ENCODE measurements at regions of chr6 and their contacts with region 1.

Region 1: DNA sequence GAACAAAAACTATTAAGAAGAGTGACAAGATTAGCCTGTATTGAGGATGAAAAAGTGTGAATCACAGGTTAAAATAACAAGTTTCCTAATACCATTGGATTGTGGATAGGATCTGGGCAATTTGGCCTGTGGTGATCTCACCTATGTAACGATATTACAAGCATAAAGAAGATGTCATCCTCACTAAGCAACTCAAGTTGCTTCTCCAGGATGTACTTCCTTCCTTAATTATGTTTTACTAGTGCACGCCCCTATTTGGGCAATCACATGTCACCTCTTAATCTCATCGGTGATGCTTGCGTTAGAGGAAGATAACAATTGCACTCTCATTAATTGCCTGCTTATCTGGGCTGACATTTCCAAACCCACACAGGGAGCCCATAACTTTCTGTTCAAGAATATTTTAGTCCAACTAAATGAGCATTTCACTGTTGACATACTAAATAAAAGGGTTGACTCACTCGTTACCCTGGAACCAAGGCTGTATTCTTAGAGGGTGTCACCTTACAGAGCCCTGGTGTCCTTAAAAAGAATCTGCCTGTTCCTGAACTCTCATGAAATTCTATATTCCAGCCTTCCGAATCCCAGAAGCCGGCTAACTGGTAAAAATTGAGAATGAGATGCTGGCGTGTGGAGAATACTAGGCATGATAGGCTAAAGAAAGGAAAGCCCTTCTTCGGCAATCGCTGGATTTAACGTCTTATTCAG is 88.2 kb upstream of the ATXN1 start:
- DNase-seq: peak; percentile 18 to 25
- ATAC-seq: peak; percentile 99
- H3K4me3 ChIP-seq: peak overlapping the region; percentile 0 to 34 (median 17)
- H3K27ac ChIP-seq: peak overlapping the region; percentile 71 to 84 (median 77)
- H3K4me1 ChIP-seq: peaks cover 17 to 24% of the 10 kb centered on the region in 2 donors
- H3K27me3 ChIP-seq: no peaks in the 10 kb centered on the region
- CTCF ChIP-seq: no peak
- POLR2A ChIP-seq: no peak

Region 2: GRCh38 chr6:16391451-16391912 is 458.0 kb before region 1 on chr6:
- in situ Hi-C with region 1: no loop called
- intact Hi-C with region 1: loop called (anchors 5 kb)
- DNase-seq: no peak
- ATAC-seq: peak in 1 of 2 donors; percentile 50
- H3K4me3 ChIP-seq: no peak overlapping the region
- H3K27ac ChIP-seq: peak overlapping the region; percentile 24 to 61 (median 46)
- H3K4me1 ChIP-seq: peaks cover 10 to 12% of the 10 kb centered on the region in 2 donors
- H3K27me3 ChIP-seq: no peaks in the 10 kb centered on the region
- CTCF ChIP-seq: no peak
- POLR2A ChIP-seq: no peak

Region 3: GRCh38 chr6:16803294-16804200 is 45.9 kb before region 1 on chr6:
- in situ Hi-C with region 1: no loop called
- intact Hi-C with region 1: loop called (anchors 5 kb)
- DNase-seq: no peak
- ATAC-seq: no peak
- H3K4me3 ChIP-seq: no peak overlapping the region
- H3K27ac ChIP-seq: no peak overlapping the region
- H3K4me1 ChIP-seq: peaks cover 22 to 25% of the 10 kb centered on the region in 2 donors
- H3K27me3 ChIP-seq: no peaks in the 10 kb centered on the region
- CTCF ChIP-seq: no peak
- POLR2A ChIP-seq: no peak